ENCODE measurements at regions of chr16 and their contacts with region 1.

Region 1: DNA sequence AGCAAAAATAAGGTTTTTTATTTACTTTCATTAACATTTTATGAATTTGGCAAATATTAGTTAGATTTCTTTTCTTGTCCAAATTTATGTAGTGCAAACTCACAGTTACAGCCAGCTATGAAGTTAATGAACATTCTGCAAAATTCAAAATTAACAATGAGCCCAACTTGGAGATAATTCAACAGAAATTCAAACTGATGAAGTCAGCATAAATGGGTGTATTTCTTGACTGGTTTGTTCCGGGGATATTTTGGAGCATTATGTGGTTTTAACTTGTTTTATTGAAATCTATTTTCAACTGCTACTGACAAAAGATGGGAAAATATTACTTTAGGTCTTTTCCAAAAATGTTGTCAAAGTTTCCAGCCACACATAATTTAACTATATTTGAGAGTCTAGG is 807.9 kb downstream of the CDH8 start:
- DNase-seq: no peak
- H3K4me3 Mint-ChIP-seq: no peak overlapping the region
- H3K27ac Mint-ChIP-seq: no peak overlapping the region
- H3K4me1 Mint-ChIP-seq: no peaks in the 10 kb centered on the region
- H3K27me3 Mint-ChIP-seq: no peaks in the 10 kb centered on the region
- CTCF ChIP-seq: no peak

Region 2: GRCh38 chr16:61195006-61195405 is 33.4 kb before region 1 on chr16:
- CTCF ChIA-PET with region 1: no interaction called
- intact Hi-C with region 1: loop called (anchors 2 kb)
- DNase-seq: no peak
- H3K4me3 Mint-ChIP-seq: no peak overlapping the region
- H3K27ac Mint-ChIP-seq: no peak overlapping the region
- H3K4me1 Mint-ChIP-seq: no peaks in the 10 kb centered on the region
- H3K27me3 Mint-ChIP-seq: no peaks in the 10 kb centered on the region
- CTCF ChIP-seq: no peak